H1 (cell line): ENCODE measurements at regions of chr2 and their contacts with region 1.

Region 1: DNA sequence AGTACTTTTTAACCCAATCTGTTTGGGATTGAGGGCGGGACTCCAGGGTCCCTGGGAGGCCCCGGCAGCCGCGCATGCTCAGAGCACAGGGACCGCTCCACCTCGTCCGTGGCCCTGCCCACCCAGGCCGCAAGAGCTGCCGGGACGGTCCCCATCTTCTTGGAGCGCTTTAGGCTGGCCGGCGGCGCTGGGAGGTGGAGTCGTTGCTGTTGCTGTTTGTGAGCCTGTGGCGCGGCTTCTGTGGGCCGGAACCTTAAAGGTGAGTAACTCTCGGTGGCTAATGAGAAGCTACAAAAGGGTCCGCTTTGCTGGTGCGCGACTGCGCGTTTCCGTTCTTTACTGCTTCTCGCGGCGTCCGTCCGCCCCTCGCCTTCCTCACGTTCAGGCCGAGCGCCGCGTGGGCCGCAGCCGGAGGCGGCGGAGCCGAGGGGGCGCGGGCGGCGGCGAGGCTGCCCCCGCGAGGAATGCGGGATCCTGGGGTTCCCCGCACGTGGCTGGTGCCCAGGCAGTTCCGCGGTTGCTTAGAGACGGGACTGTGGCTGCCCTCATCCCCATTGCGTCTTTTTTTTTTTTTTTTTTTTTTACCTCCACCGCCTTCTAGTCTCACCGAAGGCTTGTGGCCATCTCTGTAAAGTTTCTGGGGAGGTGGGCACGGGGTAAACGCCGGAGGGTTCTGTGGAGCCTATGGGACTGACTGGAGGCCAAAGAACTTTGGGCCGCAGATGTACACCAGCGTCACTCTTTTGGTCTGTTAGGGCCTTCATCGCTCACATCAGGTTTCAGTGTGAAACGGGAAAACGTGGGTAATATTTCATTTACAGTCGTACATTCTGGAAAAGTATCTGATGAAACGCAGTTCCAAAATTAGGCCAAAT is at the start of gene SSB:
- DNase-seq: peak; percentile 80 to 93
- H3K4me3 ChIP-seq: peak within 1 kb of the TSS; percentile 76 to 96 (median 88)
- H3K27ac ChIP-seq: peak within 1 kb of the TSS; percentile 90
- H3K4me1 ChIP-seq: peaks cover 0 to 7% (median 2%) of the 10 kb centered on the region in 4 experiments; a peak in 4 of 7 replicates
- H3K27me3 ChIP-seq: peaks cover 0 to 2% (median 0%) of the 10 kb centered on the region in 4 experiments; a peak in 1 of 7 replicates
- CTCF ChIP-seq: no peak
- EP300 ChIP-seq: no peak
- POLR2A ChIP-seq: peak; percentile 77 to 92
- RAD21 ChIP-seq: no peak
- total RNA-seq, gene SSB: 263 and 270 TPM in 2 replicates

Region 2: GRCh38 chr2:169815849-169816248 is 16.9 kb after region 1 on chr2:
- CTCF ChIA-PET with region 1: no interaction called
- POLR2A ChIA-PET with region 1: interaction called, 18 read pairs
- DNase-seq: no peak
- H3K4me3 ChIP-seq: no peak overlapping the region
- H3K27ac ChIP-seq: no peak overlapping the region
- H3K4me1 ChIP-seq: no peaks in the 10 kb centered on the region
- H3K27me3 ChIP-seq: no peaks in the 10 kb centered on the region
- CTCF ChIP-seq: no peak
- EP300 ChIP-seq: no peak
- POLR2A ChIP-seq: no peak
- RAD21 ChIP-seq: no peak

Region 3: DNA sequence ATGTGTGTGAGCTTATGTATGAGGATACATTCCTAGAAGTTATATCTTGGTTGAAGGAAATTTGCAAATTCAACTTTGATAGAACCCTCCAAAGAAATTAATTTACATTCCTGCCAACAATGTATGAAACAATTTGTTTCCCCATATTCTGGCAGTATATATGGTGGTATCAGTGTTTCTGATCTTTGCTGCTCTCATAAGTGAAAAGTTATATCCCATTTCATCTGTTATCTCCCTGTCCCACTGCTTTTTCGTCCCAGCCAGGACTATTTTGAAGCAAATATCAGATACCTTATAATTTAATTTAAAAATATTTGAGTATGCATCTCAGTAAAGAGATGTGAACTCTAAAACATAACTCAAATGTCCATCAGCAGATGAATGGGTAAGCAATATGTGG is 35.4 kb after region 1 on chr2:
- CTCF ChIA-PET with region 1: no interaction called
- POLR2A ChIA-PET with region 1: no interaction called
- DNase-seq: no peak
- H3K4me3 ChIP-seq: no peak overlapping the region
- H3K27ac ChIP-seq: no peak overlapping the region
- H3K4me1 ChIP-seq: no peaks in the 10 kb centered on the region
- H3K27me3 ChIP-seq: no peaks in the 10 kb centered on the region
- CTCF ChIP-seq: no peak
- EP300 ChIP-seq: no peak
- POLR2A ChIP-seq: no peak
- RAD21 ChIP-seq: no peak